ENCODE measurements at regions of chr3 and their contacts with region 1.

Region 1: GRCh38 chr3:155870133-155870944 is at the start of gene GMPS:
- DNase-seq: peak; percentile 100
- H3K4me3 ChIP-seq: peak within 1 kb of the TSS; percentile 76 to 100 (median 98)
- H3K27ac ChIP-seq: peak within 1 kb of the TSS; percentile 87 to 97 (median 94)
- H3K4me1 ChIP-seq: peaks cover 14 to 49% (median 30%) of the 10 kb centered on the region in 6 donors
- H3K27me3 ChIP-seq: no peaks in the 10 kb centered on the region
- CTCF ChIP-seq: peak; percentile 40 to 85 (median 73)
- POLR2A ChIP-seq: peak in 1 of 3 donors; percentile 34
- total RNA-seq, gene GMPS: 32.3 to 47.4 (median 39.8) TPM

Region 2: DNA sequence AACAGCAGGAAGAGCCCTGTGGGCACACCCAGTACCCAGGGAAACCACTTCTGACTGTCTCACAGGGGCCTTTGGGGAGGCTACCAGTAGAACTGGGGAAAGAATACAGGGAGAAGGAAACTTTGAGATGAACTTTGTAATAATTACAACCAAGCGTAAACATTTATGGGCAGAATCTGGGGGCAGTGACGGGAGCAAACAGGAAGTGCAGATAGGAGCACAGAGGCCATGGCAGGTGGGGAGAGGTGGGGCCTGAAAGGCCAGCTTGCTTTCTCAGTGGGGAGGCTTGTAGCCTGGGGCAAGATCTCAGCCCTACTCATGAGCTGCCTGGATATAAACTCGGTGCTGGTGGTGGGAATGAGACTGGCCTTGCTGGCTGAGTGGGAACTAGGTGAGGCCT is 335.2 kb before region 1 on chr3:
- intact Hi-C with region 1: no loop called
- DNase-seq: no peak
- H3K4me3 ChIP-seq: no peak overlapping the region
- H3K27ac ChIP-seq: no peak overlapping the region
- H3K4me1 ChIP-seq: no peaks in the 10 kb centered on the region
- H3K27me3 ChIP-seq: no peaks in the 10 kb centered on the region
- CTCF ChIP-seq: no peak
- POLR2A ChIP-seq: no peak

Region 3: GRCh38 chr3:155805802-155806618 is 64.3 kb before region 1 on chr3 and contains the start of gene C3orf33:
- intact Hi-C with region 1: loop called (anchors 10 kb)
- DNase-seq: peak; percentile 96
- H3K4me3 ChIP-seq: peak within 1 kb of the TSS; percentile 57 to 77 (median 72)
- H3K27ac ChIP-seq: peak within 1 kb of the TSS; percentile 67 to 87 (median 83)
- H3K4me1 ChIP-seq: peaks cover 0 to 20% (median 15%) of the 10 kb centered on the region in 6 donors
- H3K27me3 ChIP-seq: no peaks in the 10 kb centered on the region
- CTCF ChIP-seq: peak; percentile 57 to 94 (median 85)
- POLR2A ChIP-seq: no peak
- total RNA-seq, gene C3orf33: 1.6 to 6.0 (median 2.2) TPM

Measured in spleen (tissue), 13 donors.